Activated B cell treated with CpG ODN at 0.5 μM for 24 hours (primary cell): ENCODE measurements at regions of chr4 and their contacts with region 1.

Region 1: GRCh38 chr4:102344954-102345794 is at the start of gene SLC39A8:
- DNase-seq: peak; percentile 82
- ATAC-seq: peak; percentile 87
- H3K4me3 Mint-ChIP-seq: peak within 1 kb of the TSS; percentile 89
- H3K27ac Mint-ChIP-seq: peak within 1 kb of the TSS; percentile 93
- H3K4me1 Mint-ChIP-seq: peaks cover 34% of the 10 kb centered on the region
- H3K27me3 Mint-ChIP-seq: no peaks in the 10 kb centered on the region
- CTCF ChIP-seq: no peak
- total RNA-seq, gene SLC39A8: 17.9 and 18.1 TPM in 2 replicates

Region 2: DNA sequence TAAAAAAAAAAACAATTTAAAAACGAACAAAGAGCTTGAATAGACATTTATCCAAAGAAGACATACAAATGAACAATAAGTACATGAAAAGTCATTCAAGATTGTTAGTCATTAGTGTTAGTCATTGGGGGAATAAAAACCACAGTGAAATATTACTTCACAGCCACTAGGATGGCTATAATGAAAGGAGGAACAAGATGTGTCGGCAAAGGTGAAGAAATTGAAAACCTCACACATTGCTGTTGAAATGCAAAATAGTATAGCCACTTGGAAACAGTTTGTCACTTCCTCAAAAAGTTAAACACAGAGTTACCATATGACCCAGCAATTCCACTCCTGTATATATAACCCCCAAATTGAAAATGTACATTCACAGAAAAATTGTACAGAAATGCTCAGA is 45.3 kb after region 1 on chr4:
- CTCF ChIA-PET with region 1: no interaction called
- POLR2A ChIA-PET with region 1: no interaction called
- intact Hi-C with region 1: loop called (anchors 1 kb)
- DNase-seq: no peak
- ATAC-seq: peak; percentile 91
- H3K4me3 Mint-ChIP-seq: no peak overlapping the region
- H3K27ac Mint-ChIP-seq: no peak overlapping the region
- H3K4me1 Mint-ChIP-seq: peaks cover 13% of the 10 kb centered on the region
- H3K27me3 Mint-ChIP-seq: peaks cover 12% of the 10 kb centered on the region
- CTCF ChIP-seq: no peak

Region 3: GRCh38 chr4:102620697-102621497 is 275.7 kb after region 1 on chr4:
- CTCF ChIA-PET with region 1: no interaction called
- POLR2A ChIA-PET with region 1: no interaction called
- intact Hi-C with region 1: loop called (anchors 1 kb)
- DNase-seq: no peak
- ATAC-seq: no peak
- H3K4me3 Mint-ChIP-seq: no peak overlapping the region
- H3K27ac Mint-ChIP-seq: peak overlapping the region; percentile 30
- H3K4me1 Mint-ChIP-seq: peaks cover 27% of the 10 kb centered on the region
- H3K27me3 Mint-ChIP-seq: no peaks in the 10 kb centered on the region
- CTCF ChIP-seq: no peak

Region 4: DNA sequence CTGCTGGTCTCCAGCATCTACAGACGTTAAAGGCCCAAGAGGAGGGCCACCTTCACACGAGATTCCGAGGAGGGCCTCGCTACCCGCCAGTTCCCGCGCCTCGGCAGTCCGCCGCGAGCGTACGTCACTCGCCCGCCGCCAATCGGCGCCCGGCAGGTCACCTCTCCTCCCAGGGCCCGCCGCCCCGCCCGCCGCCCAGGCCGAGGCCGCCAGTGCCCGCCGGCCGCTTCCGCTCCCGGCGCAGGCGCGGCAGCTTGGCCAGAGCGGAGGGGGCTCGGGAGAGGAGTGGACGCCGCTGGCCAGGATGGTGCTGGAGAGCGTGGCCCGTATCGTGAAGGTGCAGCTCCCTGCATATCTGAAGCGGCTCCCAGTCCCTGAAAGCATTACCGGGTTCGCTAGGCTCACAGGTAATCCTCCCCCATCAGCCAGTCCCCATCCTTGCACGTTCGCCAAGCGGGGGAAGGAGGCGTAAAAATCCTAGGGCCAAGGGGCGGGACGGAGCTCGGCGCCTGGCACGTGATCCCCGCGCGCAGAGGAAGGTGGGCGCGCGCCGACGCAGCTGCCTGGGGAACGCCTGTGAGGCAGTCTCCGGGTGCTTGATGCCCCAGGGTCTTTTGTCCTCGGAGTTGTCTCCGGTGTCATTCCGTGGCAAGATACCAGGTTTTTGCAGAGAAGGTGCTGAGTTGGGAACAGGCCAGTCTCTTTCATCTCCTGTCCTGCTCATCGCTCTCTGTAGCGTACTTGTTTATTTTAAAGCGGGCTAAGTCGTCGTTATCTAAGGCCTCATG is 523.8 kb after region 1 on chr4 and contains the start of gene CISD2:
- CTCF ChIA-PET with region 1: no interaction called
- POLR2A ChIA-PET with region 1: interaction called, 8 read pairs
- intact Hi-C with region 1: loop called (anchors 10 kb)
- DNase-seq: peak; percentile 91
- ATAC-seq: peak; percentile 86
- H3K4me3 Mint-ChIP-seq: peak within 1 kb of the TSS; percentile 97
- H3K27ac Mint-ChIP-seq: peak within 1 kb of the TSS; percentile 97
- H3K4me1 Mint-ChIP-seq: peaks cover 51% of the 10 kb centered on the region
- H3K27me3 Mint-ChIP-seq: no peaks in the 10 kb centered on the region
- CTCF ChIP-seq: no peak
- total RNA-seq, gene CISD2: 12.6 and 13.7 TPM in 2 replicates

Region 5: GRCh38 chr4:103019308-103020124 is 674.3 kb after region 1 on chr4 and contains the start of gene SLC9B1:
- CTCF ChIA-PET with region 1: no interaction called
- POLR2A ChIA-PET with region 1: no interaction called
- intact Hi-C with region 1: loop called (anchors 2 kb)
- DNase-seq: peak; percentile 91
- ATAC-seq: peak; percentile 98
- H3K4me3 Mint-ChIP-seq: peak within 1 kb of the TSS; percentile 92
- H3K27ac Mint-ChIP-seq: peak within 1 kb of the TSS; percentile 96
- H3K4me1 Mint-ChIP-seq: peaks cover 28% of the 10 kb centered on the region
- H3K27me3 Mint-ChIP-seq: no peaks in the 10 kb centered on the region
- CTCF ChIP-seq: no peak
- total RNA-seq, gene SLC9B1: 1.2 and 2.5 TPM in 2 replicates

Region 6: GRCh38 chr4:103075901-103076739 is 730.9 kb after region 1 on chr4:
- CTCF ChIA-PET with region 1: no interaction called
- POLR2A ChIA-PET with region 1: no interaction called
- intact Hi-C with region 1: loop called (anchors 5 kb)
- DNase-seq: peak; percentile 69
- ATAC-seq: peak; percentile 64
- H3K4me3 Mint-ChIP-seq: peak overlapping the region; percentile 96
- H3K27ac Mint-ChIP-seq: peak overlapping the region; percentile 99
- H3K4me1 Mint-ChIP-seq: peaks cover 45% of the 10 kb centered on the region
- H3K27me3 Mint-ChIP-seq: no peaks in the 10 kb centered on the region
- CTCF ChIP-seq: no peak

Region 7: GRCh38 chr4:103198111-103198765 is 853.1 kb after region 1 on chr4 and contains the start of gene CENPE:
- CTCF ChIA-PET with region 1: no interaction called
- POLR2A ChIA-PET with region 1: no interaction called
- intact Hi-C with region 1: loop called (anchors 1 kb)
- DNase-seq: peak; percentile 83
- ATAC-seq: peak; percentile 94
- H3K4me3 Mint-ChIP-seq: peak within 1 kb of the TSS; percentile 93
- H3K27ac Mint-ChIP-seq: peak within 1 kb of the TSS; percentile 91
- H3K4me1 Mint-ChIP-seq: peaks cover 10% of the 10 kb centered on the region
- H3K27me3 Mint-ChIP-seq: no peaks in the 10 kb centered on the region
- CTCF ChIP-seq: no peak
- total RNA-seq, gene CENPE: 2.4 and 2.5 TPM in 2 replicates